ENCODE measurements at regions of chr5 and their contacts with region 1.

Region 1: DNA sequence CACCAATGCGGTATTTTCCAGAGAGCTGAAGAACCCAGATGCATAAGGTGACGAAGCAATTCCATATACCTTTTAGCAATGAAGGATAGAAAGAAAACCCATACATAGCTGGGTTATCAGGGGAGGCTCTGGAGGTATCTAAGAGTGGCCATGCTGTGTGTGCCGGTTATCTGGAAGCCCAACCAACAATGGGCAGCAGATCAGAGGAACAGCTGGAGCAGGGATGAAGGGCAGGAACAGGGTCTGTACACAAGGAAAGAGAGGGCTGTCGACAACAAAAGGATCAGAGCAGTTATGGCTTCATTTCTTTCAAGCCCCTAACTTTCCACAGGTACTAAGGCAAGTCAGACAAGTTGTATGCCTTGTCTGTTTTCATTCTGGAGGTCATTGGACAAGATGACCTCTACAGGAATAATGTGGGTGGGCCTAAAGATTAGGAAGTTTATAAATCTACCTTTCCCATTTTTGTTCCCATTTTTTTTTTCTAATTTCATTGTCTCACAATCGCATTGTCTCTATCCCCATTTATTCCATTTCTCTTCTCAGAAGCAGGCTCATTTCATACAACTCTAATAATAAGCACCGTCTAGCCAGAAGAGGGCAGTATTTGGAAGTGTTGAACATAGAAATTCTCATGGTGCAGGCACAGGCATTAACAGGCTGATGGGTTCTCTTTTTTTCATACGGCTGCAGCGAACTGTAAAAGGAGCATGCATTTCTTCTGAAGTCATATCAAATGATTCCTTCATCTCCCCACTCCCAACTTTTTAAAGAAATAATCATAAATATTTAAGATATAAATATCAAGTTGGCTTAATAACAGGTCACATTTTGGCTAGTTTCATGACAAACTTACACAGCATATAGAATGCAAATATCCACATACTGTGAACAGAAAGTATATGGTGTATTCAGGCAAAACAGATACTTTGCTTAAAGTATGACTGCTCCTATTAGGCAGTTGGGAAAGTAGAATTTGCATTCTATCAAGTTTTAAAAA is 63.5 kb downstream of the ZNF474 start:
- DNase-seq: peak; percentile 79
- ATAC-seq: peak; percentile 90
- H3K4me3 ChIP-seq: no peak overlapping the region
- H3K27ac ChIP-seq: no peak overlapping the region
- H3K4me1 ChIP-seq: no peaks in the 10 kb centered on the region
- H3K27me3 ChIP-seq: peaks cover under 1% of the 10 kb centered on the region; the same call in 1 of the 2 replicates
- CTCF ChIP-seq: peak; percentile 68
- POLR2A ChIP-seq: no peak
- RAD21 ChIP-seq: peak; percentile 66

Region 2: DNA sequence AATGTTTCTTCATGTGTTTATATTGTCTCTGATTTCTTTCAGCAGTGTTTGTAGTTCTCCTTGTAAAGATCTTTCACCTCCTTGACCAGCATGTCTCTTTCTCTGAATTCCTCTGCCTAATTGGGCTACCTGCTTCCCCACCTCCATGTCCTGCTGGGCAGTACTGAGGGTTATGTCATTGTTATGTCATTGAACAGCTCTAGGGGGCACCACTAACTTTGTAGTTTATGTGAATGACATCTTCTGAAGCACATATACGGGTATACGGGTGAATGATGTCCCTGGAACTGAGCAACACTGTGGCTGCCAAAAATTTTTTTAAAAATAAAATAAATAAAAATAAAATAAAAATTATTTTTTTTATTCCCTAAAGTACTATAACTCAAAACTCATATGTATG is 102.3 kb after region 1 on chr5:
- CTCF ChIA-PET with region 1: no interaction called
- POLR2A ChIA-PET with region 1: no interaction called
- dilution Hi-C with region 1: no loop called
- in situ Hi-C with region 1: no loop called
- intact Hi-C with region 1: loop called (anchors 5 kb)
- DNase-seq: no peak
- ATAC-seq: no peak
- H3K4me3 ChIP-seq: no peak overlapping the region
- H3K27ac ChIP-seq: no peak overlapping the region
- H3K4me1 ChIP-seq: peaks cover 5% of the 10 kb centered on the region; the same call in 1 of the 2 replicates
- H3K27me3 ChIP-seq: no peaks in the 10 kb centered on the region
- CTCF ChIP-seq: 0 out of 2 replicates have a peak, but pooled peaks have one; percentile 22
- POLR2A ChIP-seq: no peak
- RAD21 ChIP-seq: no peak

Region 3: DNA sequence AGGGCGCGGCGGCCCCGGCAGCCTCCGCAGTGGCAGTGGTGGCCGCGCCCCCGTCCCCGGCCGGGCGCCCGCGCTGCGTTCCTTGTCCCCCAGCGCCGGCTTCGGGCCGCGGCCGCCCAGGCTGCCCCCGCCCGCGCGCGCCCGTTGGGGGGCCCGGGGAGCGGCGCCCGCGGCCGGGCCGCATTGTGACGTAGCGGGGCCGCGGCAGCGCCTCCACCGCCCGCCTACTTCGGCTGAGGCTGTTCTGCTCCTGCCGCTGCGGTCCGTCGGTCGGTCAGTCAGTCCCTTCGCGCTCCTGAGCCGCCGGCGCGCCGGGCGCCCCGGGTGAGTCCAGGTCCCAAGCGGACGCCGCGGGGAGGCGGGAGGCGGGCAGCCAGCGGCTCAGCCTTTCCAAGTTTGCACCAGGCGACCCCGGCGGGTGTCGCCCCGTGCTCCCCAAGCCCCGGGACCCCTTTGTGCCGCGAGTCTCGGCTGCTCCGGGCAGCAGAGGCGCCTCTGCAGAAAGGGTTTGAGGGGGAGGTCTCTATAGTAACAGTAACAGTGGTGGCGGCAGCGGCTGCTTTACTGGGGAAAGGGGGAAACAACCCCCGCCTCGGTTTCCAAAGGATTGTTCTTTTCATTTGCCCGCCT is 119.3 kb after region 1 on chr5 and contains the start of gene SNCAIP:
- CTCF ChIA-PET with region 1: interaction called, 3 read pairs
- POLR2A ChIA-PET with region 1: no interaction called
- dilution Hi-C with region 1: no loop called
- in situ Hi-C with region 1: no loop called
- intact Hi-C with region 1: loop called (anchors 1 kb)
- DNase-seq: peak; percentile 64
- ATAC-seq: peak; percentile 89
- H3K4me3 ChIP-seq: peak within 1 kb of the TSS; percentile 54
- H3K27ac ChIP-seq: peak within 1 kb of the TSS; percentile 53
- H3K4me1 ChIP-seq: peaks cover 4% of the 10 kb centered on the region; the same call in 1 of the 2 replicates
- H3K27me3 ChIP-seq: no peaks in the 10 kb centered on the region
- CTCF ChIP-seq: no peak
- POLR2A ChIP-seq: no peak
- RAD21 ChIP-seq: no peak
- total RNA-seq, gene SNCAIP: 19.0 and 22.5 TPM in 2 replicates

Region 4: GRCh38 chr5:122415030-122415800 is 222.4 kb after region 1 on chr5:
- CTCF ChIA-PET with region 1: interaction called, 29 read pairs
- POLR2A ChIA-PET with region 1: no interaction called
- dilution Hi-C with region 1: loop called (anchors 25 kb)
- in situ Hi-C with region 1: no loop called
- intact Hi-C with region 1: loop called (anchors 1 kb)
- DNase-seq: peak; percentile 80
- ATAC-seq: peak; percentile 97
- H3K4me3 ChIP-seq: no peak overlapping the region
- H3K27ac ChIP-seq: no peak overlapping the region
- H3K4me1 ChIP-seq: peaks cover 9% of the 10 kb centered on the region
- H3K27me3 ChIP-seq: no peaks in the 10 kb centered on the region
- CTCF ChIP-seq: peak; percentile 85
- POLR2A ChIP-seq: no peak
- RAD21 ChIP-seq: peak; percentile 87

Region 5: DNA sequence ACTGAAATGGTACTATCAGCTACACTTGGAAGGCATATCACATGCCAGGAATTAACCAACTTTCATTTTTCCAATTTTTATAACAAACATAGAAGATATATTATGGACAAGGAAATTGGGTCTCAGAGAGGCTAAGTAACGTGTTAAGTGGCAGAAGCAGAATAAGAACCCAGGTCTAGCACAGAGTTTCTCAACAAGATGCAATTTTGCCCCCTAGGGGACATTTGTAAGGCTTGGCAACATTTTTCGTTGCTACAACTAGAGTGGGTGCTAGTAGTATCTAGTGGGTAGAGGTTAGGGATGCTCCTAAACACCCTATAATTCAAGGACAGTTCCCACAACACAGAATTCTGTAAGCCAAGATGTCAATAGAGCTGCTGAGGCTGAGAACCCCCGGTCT is 299.9 kb after region 1 on chr5:
- CTCF ChIA-PET with region 1: interaction called, 3 read pairs
- POLR2A ChIA-PET with region 1: no interaction called
- dilution Hi-C with region 1: no loop called
- in situ Hi-C with region 1: loop called (anchors 5 kb)
- intact Hi-C with region 1: no loop called
- DNase-seq: no peak
- ATAC-seq: peak; percentile 37; the same call in 1 of the 2 replicates
- H3K4me3 ChIP-seq: no peak overlapping the region
- H3K27ac ChIP-seq: no peak overlapping the region
- H3K4me1 ChIP-seq: peaks cover 4% of the 10 kb centered on the region
- H3K27me3 ChIP-seq: no peaks in the 10 kb centered on the region
- CTCF ChIP-seq: peak; percentile 34
- POLR2A ChIP-seq: no peak
- RAD21 ChIP-seq: peak; percentile 32; the same call in 1 of the 2 replicates

Region 6: DNA sequence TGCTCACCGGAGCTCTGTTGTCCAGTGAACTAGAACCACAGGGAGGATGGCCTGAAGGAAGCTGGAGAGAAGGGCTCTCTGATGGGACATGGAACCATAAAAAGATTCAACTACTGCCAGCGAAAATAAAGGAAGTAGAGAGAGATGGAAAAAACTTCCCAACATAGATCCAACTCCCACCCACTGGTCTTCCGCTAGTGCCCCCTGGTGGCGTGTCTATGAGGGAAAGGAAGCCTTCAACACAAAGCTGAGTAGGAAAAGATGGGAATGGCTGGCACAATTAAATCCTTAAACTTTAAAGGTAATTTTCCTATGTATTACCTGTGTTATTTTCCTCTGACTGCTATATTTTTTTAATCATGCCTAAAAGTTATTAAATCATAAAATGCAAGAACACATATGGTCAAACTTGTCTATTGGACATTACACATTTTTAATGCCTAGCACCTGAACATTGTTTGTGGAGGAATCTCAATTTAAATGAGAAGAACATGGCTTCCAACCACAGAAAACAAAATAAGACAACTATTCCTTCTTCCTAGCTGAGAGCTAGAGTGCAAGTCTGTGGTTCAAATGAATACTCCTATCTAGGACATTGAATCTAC is 1178.9 kb after region 1 on chr5:
- CTCF ChIA-PET with region 1: interaction called, 4 read pairs
- POLR2A ChIA-PET with region 1: no interaction called
- dilution Hi-C with region 1: no loop called
- in situ Hi-C with region 1: no loop called
- intact Hi-C with region 1: loop called (anchors 10 kb)
- DNase-seq: peak; percentile 7
- ATAC-seq: no peak
- H3K4me3 ChIP-seq: no peak overlapping the region
- H3K27ac ChIP-seq: no peak overlapping the region
- H3K4me1 ChIP-seq: no peaks in the 10 kb centered on the region
- H3K27me3 ChIP-seq: no peaks in the 10 kb centered on the region
- CTCF ChIP-seq: peak; percentile 49
- POLR2A ChIP-seq: no peak
- RAD21 ChIP-seq: peak; percentile 40